CD8-positive, alpha-beta T cell (primary cell): ENCODE measurements at regions of chr19 and their contacts with region 1.

Region 1: DNA sequence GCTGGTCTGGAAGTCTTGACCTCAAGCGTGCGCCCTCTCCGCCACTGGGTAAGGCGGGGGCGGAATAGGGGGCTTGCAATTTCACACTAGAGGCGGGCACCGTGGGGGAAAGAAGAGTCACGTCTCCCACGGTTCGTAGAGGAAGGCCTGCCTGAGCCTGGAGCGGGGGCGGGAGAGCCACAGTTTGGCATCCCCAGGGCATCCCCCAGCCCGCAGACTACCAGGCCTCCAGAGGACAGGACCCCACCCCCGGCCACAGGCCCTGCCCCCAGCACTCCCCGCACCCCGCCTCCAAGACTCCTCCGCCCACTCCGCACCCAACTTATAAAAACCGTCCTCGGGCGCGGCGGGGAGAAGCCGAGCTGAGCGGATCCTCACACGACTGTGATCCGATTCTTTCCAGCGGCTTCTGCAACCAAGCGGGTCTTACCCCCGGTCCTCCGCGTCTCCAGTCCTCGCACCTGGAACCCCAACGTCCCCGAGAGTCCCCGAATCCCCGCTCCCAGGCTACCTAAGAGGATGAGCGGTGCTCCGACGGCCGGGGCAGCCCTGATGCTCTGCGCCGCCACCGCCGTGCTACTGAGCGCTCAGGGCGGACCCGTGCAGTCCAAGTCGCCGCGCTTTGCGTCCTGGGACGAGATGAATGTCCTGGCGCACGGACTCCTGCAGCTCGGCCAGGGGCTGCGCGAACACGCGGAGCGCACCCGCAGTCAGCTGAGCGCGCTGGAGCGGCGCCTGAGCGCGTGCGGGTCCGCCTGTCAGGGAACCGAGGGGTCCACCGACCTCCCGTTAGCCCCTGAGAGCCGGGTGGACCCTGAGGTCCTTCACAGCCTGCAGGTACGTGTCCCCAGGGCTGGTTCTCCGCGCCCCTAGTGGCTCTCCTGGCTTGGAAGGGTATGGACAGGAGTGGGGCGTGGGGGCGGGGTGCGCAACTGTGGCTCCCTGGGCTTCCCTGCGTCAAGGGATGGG is at the start of gene ANGPTL4:
- DNase-seq: peak in 7 of 9 experiments; percentile 3 to 61 (median 39)
- ATAC-seq: peak; percentile 67
- H3K4me3 ChIP-seq: peak within 1 kb of the TSS; percentile 35 to 39
- H3K4me3 Mint-ChIP-seq: peak within 1 kb of the TSS; percentile 63
- H3K27ac ChIP-seq: no peak within 1 kb of the TSS
- H3K27ac Mint-ChIP-seq: no peak within 1 kb of the TSS
- H3K4me1 ChIP-seq: peaks cover 13% of the 10 kb centered on the region
- H3K4me1 Mint-ChIP-seq: peaks cover 14% of the 10 kb centered on the region
- H3K27me3 ChIP-seq: peaks cover 0 to 19% of the 10 kb centered on the region in 2 experiments
- H3K27me3 Mint-ChIP-seq: peaks cover 56% of the 10 kb centered on the region
- CTCF ChIP-seq: no peak
- total RNA-seq, gene ANGPTL4: not detected

Region 2: GRCh38 chr19:9086761-9087160 is 722.7 kb after region 1 on chr19 and contains the start of gene OR1M1:
- CTCF ChIA-PET with region 1: no interaction called
- POLR2A ChIA-PET with region 1: no interaction called
- intact Hi-C with region 1: loop called in 1 of 2 experiments (anchors 5 kb)
- DNase-seq: no peak
- ATAC-seq: no peak
- H3K4me3 ChIP-seq: no peak within 1 kb of the TSS
- H3K4me3 Mint-ChIP-seq: no peak within 1 kb of the TSS
- H3K27ac ChIP-seq: no peak within 1 kb of the TSS
- H3K27ac Mint-ChIP-seq: no peak within 1 kb of the TSS
- H3K4me1 ChIP-seq: no peaks in the 10 kb centered on the region
- H3K4me1 Mint-ChIP-seq: no peaks in the 10 kb centered on the region
- H3K27me3 ChIP-seq: no peaks in the 10 kb centered on the region
- H3K27me3 Mint-ChIP-seq: peaks cover 25% of the 10 kb centered on the region
- CTCF ChIP-seq: no peak
- total RNA-seq, gene OR1M1: not detected